Esophagus muscularis mucosa (tissue), 4 donors: ENCODE measurements at regions of chr14 and their contacts with region 1.

Region 1: DNA sequence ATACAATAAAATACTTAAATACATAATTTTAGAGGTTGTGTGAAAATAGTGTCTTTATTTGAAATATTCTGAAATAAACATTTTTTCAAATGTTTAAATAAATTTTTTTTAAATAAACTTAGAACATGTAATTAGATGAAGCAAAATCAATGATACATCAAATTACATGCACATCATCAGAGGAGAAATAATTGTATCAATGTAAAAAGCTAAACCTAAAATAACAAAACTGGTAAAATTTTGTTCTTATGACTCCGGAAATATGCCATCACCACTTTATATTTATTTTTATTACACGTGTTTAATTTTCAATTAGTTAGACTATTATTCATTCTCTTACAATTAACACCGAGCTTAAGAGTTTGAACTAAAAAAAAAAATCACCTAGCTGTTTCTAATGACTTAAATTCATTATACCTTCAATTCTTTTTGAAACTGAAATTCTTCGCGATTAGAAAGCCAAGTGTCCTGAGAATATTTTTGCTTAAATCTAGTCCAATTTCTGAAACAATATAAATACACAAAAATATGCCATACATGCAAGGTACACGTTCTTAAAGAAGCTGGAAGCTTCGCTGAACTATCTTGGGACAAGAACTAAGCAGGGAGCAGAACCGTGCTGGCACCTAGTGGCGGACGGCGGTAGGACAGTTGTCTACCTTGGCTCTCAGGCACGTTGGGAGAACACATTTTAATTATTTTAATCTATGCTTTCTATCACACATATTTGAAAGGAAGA is 230.5 kb downstream of the SLC25A21 start:
- DNase-seq: no peak
- H3K4me3 ChIP-seq: no peak overlapping the region
- H3K27ac ChIP-seq: no peak overlapping the region
- H3K4me1 ChIP-seq: no peaks in the 10 kb centered on the region
- H3K27me3 ChIP-seq: no peaks in the 10 kb centered on the region
- CTCF ChIP-seq: peak; percentile 85 to 95 (median 90)
- EP300 ChIP-seq: no peak
- POLR2A ChIP-seq: no peak

Region 2: GRCh38 chr14:36553656-36554260 is 388.2 kb before region 1 on chr14:
- intact Hi-C with region 1: loop called (anchors 10 kb)
- DNase-seq: no peak
- H3K4me3 ChIP-seq: no peak overlapping the region
- H3K27ac ChIP-seq: no peak overlapping the region
- H3K4me1 ChIP-seq: no peaks in the 10 kb centered on the region
- H3K27me3 ChIP-seq: peaks cover 0 to 4% (median 1%) of the 10 kb centered on the region in 4 donors
- CTCF ChIP-seq: peak; percentile 38 to 65 (median 59)
- EP300 ChIP-seq: no peak
- POLR2A ChIP-seq: no peak

Region 3: DNA sequence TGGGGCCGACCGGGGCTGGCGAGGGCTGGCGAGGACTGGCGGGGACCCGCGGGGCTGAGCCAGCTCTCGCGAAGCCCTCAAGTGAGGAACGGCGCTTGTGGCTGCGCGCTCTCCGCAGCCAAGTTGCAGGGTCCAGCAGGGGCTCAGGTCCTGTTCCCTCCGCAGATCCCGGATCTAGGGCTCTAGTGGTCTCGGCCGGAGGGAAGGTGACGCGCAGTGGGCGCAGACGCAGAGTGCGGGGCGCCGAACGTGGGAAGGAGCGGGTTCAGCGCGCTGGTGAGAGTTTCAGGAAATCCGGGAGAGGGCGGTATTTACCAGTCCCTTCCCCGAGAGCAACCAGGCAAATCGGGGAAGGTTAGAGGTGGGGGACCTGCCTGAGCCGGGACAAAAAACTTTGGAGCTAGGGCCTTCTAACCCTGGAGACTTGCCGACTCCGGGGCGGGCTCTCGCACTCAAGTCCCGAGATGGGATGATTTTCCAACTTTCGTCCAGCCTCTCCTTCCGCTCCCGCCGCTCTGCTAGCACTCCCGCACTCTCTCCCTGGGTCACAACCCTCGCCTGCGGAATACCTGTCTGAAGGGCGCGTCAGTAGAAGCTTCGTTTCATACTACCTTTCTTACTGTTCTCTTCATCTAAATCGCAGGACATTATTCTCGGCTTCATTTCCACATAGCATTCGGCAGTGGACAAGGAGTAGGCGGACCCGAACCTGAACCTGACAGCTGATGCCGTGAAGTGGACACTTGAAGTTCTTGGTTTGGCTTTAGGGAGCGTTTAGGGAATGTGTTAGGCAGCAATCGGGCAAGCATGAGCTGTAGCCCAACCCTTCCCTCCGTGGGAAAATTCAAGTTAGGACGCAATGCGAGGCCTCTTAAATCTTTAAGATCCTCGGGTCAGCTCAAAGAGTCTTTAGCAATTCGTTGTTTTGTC is 293.9 kb before region 1 on chr14:
- intact Hi-C with region 1: loop called (anchors 5 kb)
- DNase-seq: peak; percentile 88
- H3K4me3 ChIP-seq: peak overlapping the region; percentile 39 to 57 (median 44)
- H3K27ac ChIP-seq: no peak overlapping the region
- H3K4me1 ChIP-seq: peaks cover 17 to 21% (median 19%) of the 10 kb centered on the region in 4 donors
- H3K27me3 ChIP-seq: peaks cover 7 to 95% (median 48%) of the 10 kb centered on the region in 4 donors
- CTCF ChIP-seq: peak; percentile 34 to 51 (median 44)
- EP300 ChIP-seq: no peak
- POLR2A ChIP-seq: no peak

Region 4: GRCh38 chr14:37150414-37150813 is 208.5 kb after region 1 on chr14:
- intact Hi-C with region 1: loop called (anchors 10 kb)
- DNase-seq: no peak
- H3K4me3 ChIP-seq: no peak overlapping the region
- H3K27ac ChIP-seq: no peak overlapping the region
- H3K4me1 ChIP-seq: peaks cover 0 to 6% (median 0%) of the 10 kb centered on the region in 4 donors
- H3K27me3 ChIP-seq: no peaks in the 10 kb centered on the region
- CTCF ChIP-seq: peak; percentile 59 to 69 (median 68)
- EP300 ChIP-seq: no peak
- POLR2A ChIP-seq: no peak